OCI-LY7 (cell line): ENCODE measurements at regions of chr12 and their contacts with region 1.

Region 1: GRCh38 chr12:14629832-14630710 is 62.4 kb upstream of the PLBD1 start:
- DNase-seq: peak; percentile 82
- H3K4me3 ChIP-seq: no peak overlapping the region
- H3K27ac ChIP-seq: no peak overlapping the region
- H3K4me1 ChIP-seq: peaks cover 28% of the 10 kb centered on the region
- CTCF ChIP-seq: peak; percentile 99

Region 2: GRCh38 chr12:14716848-14717444 is 86.9 kb after region 1 on chr12:
- CTCF ChIA-PET with region 1: no interaction called
- POLR2A ChIA-PET with region 1: no interaction called
- intact Hi-C with region 1: loop called (anchors 1 kb)
- DNase-seq: peak; percentile 73
- H3K4me3 ChIP-seq: no peak overlapping the region
- H3K27ac ChIP-seq: no peak overlapping the region
- H3K4me1 ChIP-seq: peaks cover 6% of the 10 kb centered on the region
- CTCF ChIP-seq: peak; percentile 86